Aorta (tissue), 5 donors: ENCODE measurements at regions of chr9 and their contacts with region 1.

Region 1: DNA sequence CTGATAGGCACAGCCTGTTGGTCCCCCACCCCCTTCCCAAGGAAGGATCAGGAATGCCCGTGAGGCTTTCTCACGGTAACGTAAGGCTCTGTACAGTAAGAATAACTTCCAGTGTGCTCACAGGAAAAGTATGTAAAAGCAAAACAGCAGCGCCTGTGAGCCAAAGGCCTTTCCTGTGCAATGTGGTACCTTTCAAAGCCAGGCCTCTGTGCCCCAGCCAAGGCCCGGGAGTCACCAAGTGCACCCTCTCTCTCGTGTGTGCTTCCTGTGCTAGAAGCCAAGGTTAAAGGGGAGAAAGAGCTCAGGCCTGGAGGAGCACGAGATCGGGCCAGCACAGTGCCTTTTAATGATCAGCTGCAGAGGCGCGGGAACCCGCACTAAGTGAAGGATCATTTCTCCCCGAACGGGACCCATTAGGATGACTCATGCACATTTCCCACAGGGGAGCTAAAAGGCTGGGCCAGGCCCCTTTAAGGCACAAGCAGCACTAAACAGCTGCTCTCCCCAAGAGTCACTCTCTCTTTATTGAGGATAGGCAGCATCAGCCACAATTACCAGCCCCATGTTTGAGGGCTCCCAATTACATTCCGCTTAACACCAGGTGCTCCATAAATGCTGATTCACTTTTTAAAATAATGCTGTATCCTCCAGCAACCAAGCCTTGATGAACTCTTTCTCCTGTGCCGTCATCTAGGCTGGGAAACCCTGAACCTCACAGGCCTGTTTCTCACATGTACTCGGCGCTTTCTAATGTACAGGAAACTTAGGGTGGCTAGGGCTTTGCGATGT is 42.8 kb downstream of the SHB start:
- DNase-seq: peak; percentile 74 to 85
- ATAC-seq: peak; percentile 79
- H3K4me3 ChIP-seq: no peak overlapping the region
- H3K27ac ChIP-seq: peak overlapping the region in 1 of 2 donors; percentile 94
- H3K4me1 ChIP-seq: peaks cover 4 to 5% of the 10 kb centered on the region in 2 donors
- H3K27me3 ChIP-seq: no peaks in the 10 kb centered on the region

Region 2: DNA sequence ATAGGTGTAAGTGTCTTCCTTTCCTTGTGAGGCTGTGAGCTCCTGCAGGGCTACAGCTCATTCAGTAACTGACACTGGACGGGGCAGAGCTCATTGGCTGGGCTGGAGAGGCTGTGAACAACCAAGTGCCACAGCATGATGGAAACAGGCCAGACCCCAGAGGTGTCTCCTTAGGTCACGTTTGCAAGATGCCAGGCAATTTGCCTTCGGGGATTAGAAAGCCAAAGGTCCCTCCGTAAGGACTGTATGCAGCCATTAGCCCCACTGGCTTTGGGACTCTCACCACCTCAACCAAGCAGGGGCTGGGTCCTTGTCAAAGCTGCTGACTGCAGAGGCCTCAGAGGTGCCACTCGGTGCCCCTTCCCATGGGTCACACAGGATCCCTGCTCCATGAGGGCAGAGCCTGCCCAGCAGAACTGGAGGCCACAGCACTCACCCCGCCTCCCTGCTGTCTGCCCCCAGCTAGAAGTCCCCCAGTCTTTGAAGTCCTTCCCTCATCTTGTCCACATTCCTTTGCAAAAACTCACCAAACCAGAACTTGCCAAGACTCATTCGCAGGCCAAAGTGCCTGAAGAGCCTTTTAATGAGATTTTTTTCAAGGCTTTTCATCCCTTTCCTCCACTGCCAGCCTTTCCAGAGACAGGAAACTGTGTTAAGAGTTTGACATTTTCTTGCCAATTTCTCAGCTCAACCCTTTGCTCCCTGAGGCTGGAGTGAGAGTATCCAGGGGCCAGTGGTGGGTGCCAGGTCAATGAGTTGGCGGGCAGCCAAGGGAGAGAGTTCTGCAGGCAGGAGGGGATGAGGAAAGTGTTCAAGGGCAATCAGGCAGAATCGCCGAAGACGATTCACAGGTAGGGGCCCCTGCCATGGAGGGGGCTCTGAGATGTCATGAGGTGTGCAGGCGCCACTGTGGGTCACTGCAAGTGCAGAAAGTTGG is 82.6 kb before region 1 on chr9:
- intact Hi-C with region 1: loop called in 1 of 2 experiments (anchors 5 kb)
- DNase-seq: peak in 1 of 2 donors; percentile 79
- ATAC-seq: peak; percentile 47
- H3K4me3 ChIP-seq: no peak overlapping the region
- H3K27ac ChIP-seq: peak overlapping the region in 1 of 2 donors; percentile 66
- H3K4me1 ChIP-seq: peaks cover 0 to 7% of the 10 kb centered on the region in 2 donors
- H3K27me3 ChIP-seq: no peaks in the 10 kb centered on the region

Region 3: DNA sequence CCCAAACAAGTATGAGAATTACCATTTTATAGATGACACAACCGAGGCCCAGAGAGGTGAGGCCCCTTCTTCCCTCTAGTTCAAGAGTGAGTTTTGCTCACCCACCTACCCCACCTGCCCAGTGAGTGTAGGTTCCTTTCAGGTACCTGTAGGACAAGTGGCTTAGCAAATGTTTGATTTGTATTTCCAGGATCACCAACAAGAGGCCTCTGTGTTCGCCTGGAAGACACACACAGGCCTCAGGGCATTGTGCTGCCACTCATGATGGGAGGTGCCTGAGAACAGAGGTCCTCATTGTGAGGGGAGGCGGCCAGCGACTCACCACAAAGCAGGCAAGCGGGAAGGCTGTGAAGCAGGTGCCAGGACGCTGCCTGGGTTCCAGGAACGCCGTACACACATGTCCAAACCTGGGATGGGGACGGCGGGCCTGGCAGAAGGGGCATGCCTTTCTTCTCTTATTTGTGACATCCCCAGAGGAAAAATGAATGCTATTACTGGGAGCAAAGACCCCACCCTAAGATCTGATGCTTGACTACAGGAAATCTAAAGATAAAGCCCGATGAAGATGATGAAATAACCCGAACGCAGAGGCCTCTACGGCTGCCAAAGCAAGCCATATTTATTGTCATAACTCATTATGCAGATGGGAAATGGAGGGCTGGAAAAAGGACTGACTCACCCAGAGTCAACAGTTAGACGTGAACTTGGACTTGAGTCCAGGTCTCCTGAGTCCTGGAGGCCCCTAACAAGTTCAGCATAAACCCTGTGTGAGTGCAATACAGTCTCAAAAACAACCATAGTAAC is 62.1 kb before region 1 on chr9:
- intact Hi-C with region 1: loop called in 1 of 2 experiments (anchors 10 kb)
- DNase-seq: peak; percentile 87 to 90
- ATAC-seq: peak; percentile 81
- H3K4me3 ChIP-seq: no peak overlapping the region
- H3K27ac ChIP-seq: peak overlapping the region; percentile 87 to 94
- H3K4me1 ChIP-seq: peaks cover 2 to 3% of the 10 kb centered on the region in 2 donors
- H3K27me3 ChIP-seq: no peaks in the 10 kb centered on the region

Region 4: GRCh38 chr9:37988041-37988440 is 38.2 kb before region 1 on chr9:
- intact Hi-C with region 1: loop called in 1 of 2 experiments (anchors 2 kb)
- DNase-seq: peak in 1 of 2 donors; percentile 58
- ATAC-seq: no peak
- H3K4me3 ChIP-seq: no peak overlapping the region
- H3K27ac ChIP-seq: no peak overlapping the region
- H3K4me1 ChIP-seq: peaks cover 0 to 5% of the 10 kb centered on the region in 2 donors
- H3K27me3 ChIP-seq: no peaks in the 10 kb centered on the region

Region 5: DNA sequence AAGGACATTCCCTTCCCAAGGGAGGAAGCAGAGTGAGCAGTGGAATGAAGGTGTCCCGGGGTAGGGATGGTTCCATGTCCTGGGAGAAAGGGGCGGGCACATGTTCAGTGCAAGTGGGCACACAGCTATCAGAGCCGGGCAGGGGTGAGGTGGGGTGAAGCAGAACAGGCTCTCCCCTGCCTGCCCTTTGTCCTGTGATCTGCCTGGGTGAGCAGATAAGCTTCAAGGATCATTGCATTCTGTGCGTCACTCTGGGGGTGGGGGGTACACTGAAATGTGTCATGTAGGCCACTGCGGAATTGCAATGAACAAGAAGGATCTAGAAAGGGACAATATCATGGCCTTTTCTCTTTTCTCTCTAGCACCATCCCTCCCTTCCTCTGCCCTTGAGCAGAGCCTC is 104.5 kb after region 1 on chr9:
- intact Hi-C with region 1: no loop called
- DNase-seq: no peak
- ATAC-seq: no peak
- H3K4me3 ChIP-seq: no peak overlapping the region
- H3K27ac ChIP-seq: no peak overlapping the region
- H3K4me1 ChIP-seq: no peaks in the 10 kb centered on the region
- H3K27me3 ChIP-seq: no peaks in the 10 kb centered on the region